ENCODE measurements at regions of chr5 and their contacts with region 1.

Region 1: DNA sequence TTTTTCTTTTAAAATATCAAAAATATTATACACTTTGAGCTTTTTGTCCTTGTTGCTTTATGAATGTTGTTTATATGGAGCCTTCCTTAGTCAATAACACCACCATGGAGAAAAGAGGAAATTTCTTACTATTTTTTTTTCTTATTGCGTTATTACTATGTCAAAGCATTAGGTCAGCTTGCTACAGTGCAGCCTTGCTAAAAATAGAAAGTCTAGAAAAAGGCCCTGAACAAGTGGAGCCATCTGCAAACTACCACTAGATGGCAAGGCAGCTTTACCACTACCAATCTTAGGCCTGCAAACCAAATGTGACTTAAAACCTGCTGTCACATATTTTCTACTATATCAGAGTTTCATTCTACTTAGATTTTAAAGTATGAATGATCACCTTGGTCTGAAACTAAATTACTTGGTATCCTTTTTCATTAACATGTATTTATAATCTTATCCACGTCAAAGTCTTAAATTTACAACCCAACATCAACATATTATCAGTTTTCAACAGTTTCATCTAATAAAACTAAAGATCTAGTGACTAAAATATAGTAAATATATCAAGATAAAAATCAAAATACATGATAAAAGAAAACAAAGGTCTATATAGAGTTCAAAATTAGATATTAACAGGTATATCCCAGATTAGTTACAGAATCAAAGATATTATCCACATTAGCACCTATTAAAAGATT is 113.1 kb upstream of the ACOT12 start:
- H3K4me3 Mint-ChIP-seq: no peak overlapping the region
- H3K27ac Mint-ChIP-seq: no peak overlapping the region
- H3K4me1 Mint-ChIP-seq: peaks cover 1% of the 10 kb centered on the region
- H3K27me3 Mint-ChIP-seq: no peaks in the 10 kb centered on the region

Region 2: GRCh38 chr5:81425569-81425968 is 81.5 kb before region 1 on chr5:
- intact Hi-C with region 1: loop called (anchors 5 kb)
- H3K4me3 Mint-ChIP-seq: no peak overlapping the region
- H3K27ac Mint-ChIP-seq: no peak overlapping the region
- H3K4me1 Mint-ChIP-seq: peaks cover 19% of the 10 kb centered on the region
- H3K27me3 Mint-ChIP-seq: no peaks in the 10 kb centered on the region

Region 3: DNA sequence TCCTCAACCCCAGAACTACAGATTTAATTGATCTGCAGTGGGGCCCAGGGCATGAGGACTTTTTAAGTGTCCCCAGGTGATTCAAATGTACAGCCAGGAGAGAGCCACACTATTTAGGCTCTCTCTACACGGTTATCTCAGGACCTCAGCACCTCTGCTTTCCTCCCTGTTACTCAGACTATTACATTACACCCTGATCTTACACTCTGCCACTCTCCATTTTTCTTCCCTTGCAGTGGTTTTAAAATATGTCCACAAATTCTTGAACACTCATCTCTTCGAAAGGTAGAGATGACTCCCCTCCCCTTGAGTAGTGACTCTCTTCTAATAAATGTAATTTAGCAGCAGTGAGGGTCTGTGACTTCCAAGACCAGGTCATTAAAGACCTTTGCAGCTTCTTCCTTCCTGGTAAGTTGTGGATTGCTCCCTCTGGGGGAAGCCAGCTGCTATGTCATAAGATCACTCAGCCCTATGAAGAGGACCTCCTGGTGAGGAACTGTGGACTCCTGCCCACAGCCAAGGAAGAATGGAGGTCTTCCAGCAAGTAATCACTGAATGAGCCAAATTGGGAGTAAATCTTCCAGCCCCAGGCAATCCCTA is 331.4 kb after region 1 on chr5:
- intact Hi-C with region 1: loop called (anchors 5 kb)
- H3K4me3 Mint-ChIP-seq: no peak overlapping the region
- H3K27ac Mint-ChIP-seq: peak overlapping the region; percentile 33
- H3K4me1 Mint-ChIP-seq: peaks cover 11% of the 10 kb centered on the region
- H3K27me3 Mint-ChIP-seq: no peaks in the 10 kb centered on the region